Activated T-helper 1 cell treated with anti-CD3 and anti-CD28 coated beads, Interleukin-12 subunit alpha, Interleukin-12 subunit beta, Interleukin-2, Interleukin-4 antibody, amounts not matched to agents 30 ng/mL and 10 ng/mL and 1 ng/mL, durations not matched to agents 14 hours and 24 hours and 36 hours (primary cell): ENCODE measurements at regions of chr1 and their contacts with region 1.

Region 1: GRCh38 chr1:235391874-235392273 is 24.6 kb downstream of the TBCE start:
- DNase-seq: no peak
- H3K4me3 Mint-ChIP-seq: no peak overlapping the region
- H3K27ac Mint-ChIP-seq: no peak overlapping the region
- H3K4me1 Mint-ChIP-seq: no peaks in the 10 kb centered on the region
- H3K27me3 Mint-ChIP-seq: no peaks in the 10 kb centered on the region

Region 2: DNA sequence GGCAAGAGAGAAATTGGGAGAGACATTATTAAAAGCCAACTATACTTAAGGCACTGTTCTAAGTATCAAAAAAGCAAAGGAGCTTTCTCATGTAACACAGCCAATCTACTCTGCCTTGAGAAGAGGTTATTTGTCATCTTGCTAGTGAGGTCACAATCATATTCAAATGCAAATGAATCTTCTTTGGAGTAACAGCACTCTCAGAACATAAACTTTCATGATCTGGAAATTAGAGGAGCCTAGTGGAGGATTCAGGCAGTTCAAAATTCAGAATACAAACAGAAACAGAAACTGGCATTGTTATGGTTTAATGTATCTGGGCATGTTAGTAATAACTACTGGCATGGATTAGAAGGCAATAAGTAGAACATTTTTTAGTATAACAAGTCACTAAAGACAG is 121.2 kb before region 1 on chr1:
- intact Hi-C with region 1: no loop called
- DNase-seq: no peak
- H3K4me3 Mint-ChIP-seq: no peak overlapping the region
- H3K27ac Mint-ChIP-seq: peak overlapping the region; percentile 54
- H3K4me1 Mint-ChIP-seq: peaks cover 43% of the 10 kb centered on the region
- H3K27me3 Mint-ChIP-seq: no peaks in the 10 kb centered on the region

Region 3: GRCh38 chr1:235357485-235358378 is 34.1 kb before region 1 on chr1:
- intact Hi-C with region 1: loop called (anchors 1 kb)
- DNase-seq: no peak
- H3K4me3 Mint-ChIP-seq: no peak overlapping the region
- H3K27ac Mint-ChIP-seq: no peak overlapping the region
- H3K4me1 Mint-ChIP-seq: no peaks in the 10 kb centered on the region
- H3K27me3 Mint-ChIP-seq: peaks cover 2% of the 10 kb centered on the region